ENCODE measurements at regions of chr12 and their contacts with region 1.

Region 1: DNA sequence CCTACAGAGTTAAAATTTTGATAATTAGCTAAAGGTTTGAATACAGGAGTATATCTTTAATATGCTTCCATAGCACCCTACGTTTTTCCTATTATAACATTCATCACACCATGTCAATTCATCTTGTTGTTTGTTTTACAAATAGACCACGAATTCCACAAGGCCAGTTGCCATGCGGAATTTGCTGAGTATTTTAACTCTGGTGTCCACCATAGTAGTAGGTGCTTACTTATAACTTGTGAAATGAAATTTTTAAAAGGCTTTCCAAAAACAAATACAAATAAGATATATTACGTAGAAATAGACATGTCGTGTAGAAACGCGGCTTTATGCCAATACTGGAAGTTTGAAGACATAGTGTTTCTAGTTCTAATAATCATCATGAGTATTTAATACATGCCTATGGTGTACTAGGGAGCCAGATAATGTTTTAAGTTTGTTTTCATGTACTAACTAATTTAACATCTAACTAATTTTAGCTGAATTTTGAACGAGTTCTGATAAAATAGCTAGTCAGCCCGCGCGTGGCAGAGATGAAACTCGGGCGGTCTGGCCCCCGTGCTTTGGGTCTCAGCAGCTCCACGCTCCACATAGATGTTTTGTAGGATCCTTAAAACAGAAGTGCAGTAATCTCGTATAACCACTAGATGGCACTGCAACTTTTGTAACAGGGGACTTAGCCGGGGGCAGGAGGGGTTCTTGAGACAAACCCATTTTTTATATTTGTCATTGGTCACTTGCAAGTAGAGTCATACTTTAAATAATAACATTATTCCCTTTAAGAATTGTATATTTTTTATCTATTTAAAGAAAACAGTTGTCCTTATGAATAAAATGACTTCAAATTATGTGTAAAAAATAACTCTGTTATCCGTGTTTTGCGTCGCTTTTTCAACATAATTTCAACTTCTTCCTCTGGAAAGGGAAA is 10.2 kb downstream of the CD69 start:
- DNase-seq: no peak
- ATAC-seq: peak; percentile 61
- H3K4me3 ChIP-seq: no peak overlapping the region
- H3K27ac ChIP-seq: no peak overlapping the region
- H3K4me1 ChIP-seq: no peaks in the 10 kb centered on the region
- H3K27me3 ChIP-seq: no peaks in the 10 kb centered on the region
- CTCF ChIP-seq: peak; percentile 71 to 88 (median 74)
- EP300 ChIP-seq: no peak
- POLR2A ChIP-seq: no peak
- RAD21 ChIP-seq: peak; percentile 97

Region 2: GRCh38 chr12:9760699-9761418 is 10.3 kb after region 1 on chr12 and contains the start of gene CD69:
- CTCF ChIA-PET with region 1: interaction called, 102 read pairs
- POLR2A ChIA-PET with region 1: interaction called, 5 read pairs
- RAD21 ChIA-PET with region 1: interaction called, 58 read pairs
- SMC1A ChIA-PET with region 1: interaction called, 71 read pairs
- in situ Hi-C with region 1: no loop called
- intact Hi-C with region 1: no loop called
- DNase-seq: peak; percentile 95
- ATAC-seq: peak; percentile 64
- H3K4me3 ChIP-seq: peak within 1 kb of the TSS; percentile 87
- H3K27ac ChIP-seq: peak within 1 kb of the TSS; percentile 76
- H3K4me1 ChIP-seq: peaks cover 18% of the 10 kb centered on the region
- H3K27me3 ChIP-seq: no peaks in the 10 kb centered on the region
- CTCF ChIP-seq: no peak
- EP300 ChIP-seq: peak; percentile 62 to 68; a peak in 3 of 4 replicates
- POLR2A ChIP-seq: peak; percentile 94
- RAD21 ChIP-seq: no peak
- polyA plus RNA-seq, gene CD69: 32.9 to 55.7 TPM

Region 3: DNA sequence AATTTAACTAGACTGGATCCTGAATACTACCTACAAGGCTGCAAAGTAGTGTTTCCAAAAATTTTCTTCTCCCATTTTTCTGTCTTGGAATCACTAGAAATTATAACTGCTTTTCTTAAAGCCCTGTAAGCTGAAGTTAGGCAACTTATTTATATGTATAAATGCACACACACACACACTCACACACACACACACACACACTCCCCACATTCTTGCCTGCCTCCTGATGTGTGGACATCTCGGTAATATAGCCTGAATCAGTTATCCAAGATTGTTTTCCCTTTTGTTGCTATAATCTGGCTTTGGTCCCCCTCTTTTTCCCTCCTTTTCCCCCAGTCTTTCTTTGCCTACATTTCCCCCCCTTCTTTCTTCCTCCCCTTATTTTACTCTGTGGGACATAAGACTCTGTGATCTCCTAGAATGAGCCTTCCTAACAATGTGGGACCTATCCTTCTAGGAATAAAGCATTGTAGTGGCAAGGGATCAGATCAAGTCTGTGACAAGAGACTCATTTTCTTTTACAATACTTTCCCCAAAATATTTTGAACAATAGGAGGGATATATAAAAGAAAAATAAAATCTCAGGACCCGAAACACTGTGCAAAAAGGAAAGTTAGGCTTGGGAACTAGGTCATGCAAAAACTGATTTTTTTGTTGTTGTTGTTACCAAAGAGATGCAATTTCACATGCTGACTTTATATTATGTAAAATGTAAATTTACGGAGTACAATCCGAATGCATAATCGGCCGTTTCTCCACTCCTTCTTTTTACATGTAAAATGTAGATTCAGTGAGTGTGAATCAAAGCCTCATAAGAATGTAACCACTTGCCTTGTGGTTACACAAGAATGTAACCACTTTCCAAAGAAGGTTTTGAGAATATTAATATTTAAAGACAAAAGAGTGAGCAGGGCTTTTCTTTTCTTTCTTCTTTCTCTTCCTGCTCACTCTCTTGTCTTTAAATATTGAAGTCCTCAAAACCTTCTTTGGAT is 36.5 kb after region 1 on chr12:
- CTCF ChIA-PET with region 1: interaction called, 32 read pairs
- POLR2A ChIA-PET with region 1: no interaction called
- RAD21 ChIA-PET with region 1: interaction called, 11 read pairs
- SMC1A ChIA-PET with region 1: interaction called, 814 read pairs
- in situ Hi-C with region 1: no loop called
- intact Hi-C with region 1: no loop called
- DNase-seq: no peak
- ATAC-seq: no peak
- H3K4me3 ChIP-seq: no peak overlapping the region
- H3K27ac ChIP-seq: no peak overlapping the region
- H3K4me1 ChIP-seq: no peaks in the 10 kb centered on the region
- H3K27me3 ChIP-seq: no peaks in the 10 kb centered on the region; a peak in 1 of 4 replicates
- CTCF ChIP-seq: no peak
- EP300 ChIP-seq: no peak
- POLR2A ChIP-seq: no peak
- RAD21 ChIP-seq: no peak

Region 4: DNA sequence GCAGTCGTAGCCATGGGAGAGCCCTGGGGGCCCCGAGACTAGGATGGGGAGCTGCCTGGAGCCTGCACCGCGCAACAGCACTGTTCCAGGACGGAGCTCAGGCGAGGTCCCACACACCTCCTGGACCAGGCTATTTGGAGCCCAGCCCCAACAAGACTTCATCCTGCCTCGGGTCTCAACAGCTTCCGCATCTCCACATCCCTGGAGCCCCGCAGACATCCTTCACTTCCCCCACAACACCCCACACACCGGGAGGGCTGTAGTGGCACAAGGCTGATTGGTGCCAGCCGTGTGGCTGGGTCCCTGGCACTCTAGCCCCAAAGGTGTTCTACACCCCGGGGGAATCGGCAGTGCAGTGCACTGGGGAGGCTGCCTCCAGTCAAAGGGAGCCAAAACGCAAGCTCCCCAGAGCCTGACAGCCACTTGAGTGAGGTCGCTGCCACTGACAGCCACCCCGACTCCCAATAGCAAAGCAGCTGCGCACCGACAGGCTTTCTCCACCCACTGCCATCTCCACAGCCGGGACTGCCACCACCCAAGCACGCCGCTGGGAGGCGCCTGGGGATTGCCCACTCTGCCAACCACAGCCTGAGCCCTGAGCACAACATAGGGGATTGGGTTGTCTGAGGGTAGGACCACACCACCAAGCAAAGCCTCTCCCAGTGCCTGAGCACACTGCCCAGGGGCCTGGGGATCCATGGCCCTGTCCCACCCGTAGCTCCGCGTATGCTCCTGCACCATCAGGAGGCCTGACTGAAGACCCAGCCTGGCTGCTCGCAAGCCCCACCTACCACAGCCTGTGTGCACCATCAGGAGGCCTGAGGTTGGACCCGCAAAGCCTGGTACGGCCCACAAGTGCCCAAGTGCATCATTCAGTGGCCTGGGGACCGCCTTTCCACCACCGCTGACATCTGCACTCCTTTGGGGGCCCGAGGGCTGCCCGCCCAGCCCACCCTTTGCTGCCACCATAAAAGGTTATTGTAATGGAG is 63.6 kb after region 1 on chr12:
- CTCF ChIA-PET with region 1: interaction called, 73 read pairs
- POLR2A ChIA-PET with region 1: no interaction called
- RAD21 ChIA-PET with region 1: interaction called, 10 read pairs
- SMC1A ChIA-PET with region 1: interaction called, 34 read pairs
- in situ Hi-C with region 1: no loop called
- intact Hi-C with region 1: no loop called
- DNase-seq: peak; percentile 23
- ATAC-seq: peak; percentile 100
- H3K4me3 ChIP-seq: peak overlapping the region; percentile 58; the same call in 1 of the 2 replicates
- H3K27ac ChIP-seq: no peak overlapping the region
- H3K4me1 ChIP-seq: no peaks in the 10 kb centered on the region
- H3K27me3 ChIP-seq: no peaks in the 10 kb centered on the region; a peak in 2 of 4 replicates
- CTCF ChIP-seq: peak; percentile 93 to 97 (median 93)
- EP300 ChIP-seq: no peak
- POLR2A ChIP-seq: no peak
- RAD21 ChIP-seq: peak; percentile 92

Region 5: DNA sequence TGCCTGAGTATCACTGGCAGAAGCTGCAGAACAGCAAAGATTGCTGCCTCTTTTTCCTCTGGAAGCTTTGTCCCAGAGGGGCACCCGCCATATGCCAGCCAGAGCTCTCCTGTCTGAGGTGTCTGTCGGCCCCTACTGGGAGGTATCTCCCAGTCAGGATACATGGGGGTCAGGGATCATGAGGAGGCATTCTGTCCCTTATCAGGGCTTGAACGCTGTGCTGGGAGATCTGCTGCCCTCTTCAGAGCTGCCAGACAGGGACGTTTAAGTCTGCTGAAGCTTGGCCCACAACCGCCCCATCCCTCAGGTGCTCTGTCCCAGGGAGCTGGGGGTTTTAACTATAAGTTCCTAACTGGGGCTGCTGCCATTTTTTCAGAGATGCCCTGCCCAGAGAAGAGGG is 98.4 kb after region 1 on chr12:
- CTCF ChIA-PET with region 1: no interaction called
- POLR2A ChIA-PET with region 1: no interaction called
- RAD21 ChIA-PET with region 1: no interaction called
- SMC1A ChIA-PET with region 1: no interaction called
- in situ Hi-C with region 1: no loop called
- intact Hi-C with region 1: no loop called
- DNase-seq: no peak
- ATAC-seq: no peak
- H3K4me3 ChIP-seq: no peak overlapping the region
- H3K27ac ChIP-seq: no peak overlapping the region
- H3K4me1 ChIP-seq: no peaks in the 10 kb centered on the region
- H3K27me3 ChIP-seq: no peaks in the 10 kb centered on the region
- CTCF ChIP-seq: no peak
- EP300 ChIP-seq: no peak
- POLR2A ChIP-seq: no peak
- RAD21 ChIP-seq: no peak

Region 6: GRCh38 chr12:9925708-9926393 is 175.3 kb after region 1 on chr12:
- CTCF ChIA-PET with region 1: interaction called, 97 read pairs
- POLR2A ChIA-PET with region 1: no interaction called
- RAD21 ChIA-PET with region 1: interaction called, 20 read pairs
- SMC1A ChIA-PET with region 1: interaction called, 50 read pairs
- in situ Hi-C with region 1: loop called (anchors 5 kb)
- intact Hi-C with region 1: loop called (anchors 1 kb)
- DNase-seq: no peak
- ATAC-seq: peak; percentile 67
- H3K4me3 ChIP-seq: no peak overlapping the region
- H3K27ac ChIP-seq: no peak overlapping the region
- H3K4me1 ChIP-seq: no peaks in the 10 kb centered on the region
- H3K27me3 ChIP-seq: no peaks in the 10 kb centered on the region
- CTCF ChIP-seq: peak; percentile 38 to 46 (median 43); a peak in 5 of 6 replicates
- EP300 ChIP-seq: no peak
- POLR2A ChIP-seq: no peak
- RAD21 ChIP-seq: peak; percentile 59

Region 7: DNA sequence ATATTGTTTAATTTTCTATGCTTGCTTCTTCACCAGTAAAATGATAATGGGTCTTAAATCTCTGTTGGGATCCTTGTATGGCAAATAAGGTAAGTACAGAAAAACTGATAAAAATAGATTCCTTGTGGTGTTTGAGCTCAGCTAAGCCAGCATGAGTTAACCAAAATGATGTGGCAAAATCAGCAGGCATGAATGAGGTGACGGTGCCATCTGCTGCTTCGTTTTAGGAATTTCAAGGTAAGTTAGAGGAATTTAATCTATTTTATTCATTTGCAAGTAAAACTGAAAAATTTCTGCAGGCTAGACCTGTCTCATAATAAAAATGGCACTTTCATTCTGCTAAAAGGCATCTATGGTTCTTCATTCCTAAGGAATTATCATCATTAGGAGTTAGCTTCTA is 389.5 kb after region 1 on chr12:
- CTCF ChIA-PET with region 1: interaction called, 34 read pairs
- POLR2A ChIA-PET with region 1: no interaction called
- RAD21 ChIA-PET with region 1: interaction called, 16 read pairs
- SMC1A ChIA-PET with region 1: interaction called, 4 read pairs
- in situ Hi-C with region 1: loop called (anchors 5 kb)
- intact Hi-C with region 1: loop called (anchors 5 kb)
- DNase-seq: peak; percentile 48
- ATAC-seq: peak; percentile 47; the same call in 2 of the 3 replicates
- H3K4me3 ChIP-seq: no peak overlapping the region
- H3K27ac ChIP-seq: no peak overlapping the region
- H3K4me1 ChIP-seq: no peaks in the 10 kb centered on the region
- H3K27me3 ChIP-seq: no peaks in the 10 kb centered on the region; a peak in 1 of 4 replicates
- CTCF ChIP-seq: peak; percentile 47 to 77 (median 57); a peak in 5 of 6 replicates
- EP300 ChIP-seq: no peak
- POLR2A ChIP-seq: no peak
- RAD21 ChIP-seq: peak; percentile 97